H1 (cell line): ENCODE measurements at regions of chr12 and their contacts with region 1.

Region 1: GRCh38 chr12:108950991-108951739 is 69.7 kb downstream of the SVOP start:
- DNase-seq: peak; percentile 17 to 81
- H3K4me3 ChIP-seq: no peak overlapping the region
- H3K27ac ChIP-seq: no peak overlapping the region
- H3K4me1 ChIP-seq: no peaks in the 10 kb centered on the region
- H3K27me3 ChIP-seq: no peaks in the 10 kb centered on the region
- CTCF ChIP-seq: peak; percentile 78 to 85 (median 83)
- EP300 ChIP-seq: no peak
- POLR2A ChIP-seq: no peak
- RAD21 ChIP-seq: peak; percentile 91 to 96

Region 2: DNA sequence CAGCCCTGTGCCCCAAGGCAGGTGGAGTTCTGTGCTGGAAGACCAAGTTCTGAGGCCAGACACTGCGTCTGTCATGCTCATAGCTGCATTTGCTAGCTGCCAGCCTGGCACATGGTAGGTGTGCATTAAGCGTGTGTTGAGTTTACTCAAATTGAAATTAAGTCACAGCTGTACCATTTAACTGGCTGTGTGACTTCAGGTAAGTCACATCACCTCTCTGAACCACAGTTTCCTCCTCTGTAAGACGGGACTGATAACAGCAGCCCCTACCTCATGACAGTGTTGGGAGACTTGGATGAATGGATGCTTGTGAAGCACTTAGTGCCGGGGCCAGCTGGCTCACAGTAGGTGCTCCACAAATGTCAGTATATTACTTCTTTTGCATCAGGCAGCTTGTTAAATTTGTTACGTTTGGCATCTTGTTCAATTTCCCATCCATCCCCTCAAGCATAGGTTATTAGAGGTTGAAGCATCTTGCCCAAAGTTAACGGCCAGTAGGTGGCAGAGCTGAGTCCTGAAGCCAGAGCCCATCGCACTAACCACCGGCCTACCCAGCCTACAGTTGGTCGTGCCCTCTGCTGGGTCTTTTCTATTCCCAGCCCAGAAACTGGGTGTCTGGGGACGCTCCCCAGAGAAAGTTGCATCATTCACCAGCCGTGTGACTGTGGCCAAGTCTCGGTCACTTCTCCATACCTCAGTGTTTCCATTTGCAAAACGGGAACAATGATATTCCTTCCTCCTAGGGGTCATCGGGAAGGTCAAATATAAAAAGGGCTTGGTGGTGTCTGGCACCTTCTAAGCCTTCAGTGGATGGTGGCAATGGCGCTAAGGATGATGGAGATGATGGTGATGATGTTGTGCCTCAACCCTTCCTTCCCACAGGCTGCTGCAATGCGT is 66.8 kb before region 1 on chr12:
- CTCF ChIA-PET with region 1: interaction called, 71 read pairs
- POLR2A ChIA-PET with region 1: no interaction called
- DNase-seq: peak; percentile 15 to 90
- H3K4me3 ChIP-seq: no peak overlapping the region
- H3K27ac ChIP-seq: no peak overlapping the region
- H3K4me1 ChIP-seq: peaks cover 0 to 5% (median 3%) of the 10 kb centered on the region in 4 experiments; a peak in 5 of 7 replicates
- H3K27me3 ChIP-seq: no peaks in the 10 kb centered on the region
- CTCF ChIP-seq: peak; percentile 73 to 84 (median 77)
- EP300 ChIP-seq: no peak
- POLR2A ChIP-seq: no peak
- RAD21 ChIP-seq: peak; percentile 55 to 73

Region 3: DNA sequence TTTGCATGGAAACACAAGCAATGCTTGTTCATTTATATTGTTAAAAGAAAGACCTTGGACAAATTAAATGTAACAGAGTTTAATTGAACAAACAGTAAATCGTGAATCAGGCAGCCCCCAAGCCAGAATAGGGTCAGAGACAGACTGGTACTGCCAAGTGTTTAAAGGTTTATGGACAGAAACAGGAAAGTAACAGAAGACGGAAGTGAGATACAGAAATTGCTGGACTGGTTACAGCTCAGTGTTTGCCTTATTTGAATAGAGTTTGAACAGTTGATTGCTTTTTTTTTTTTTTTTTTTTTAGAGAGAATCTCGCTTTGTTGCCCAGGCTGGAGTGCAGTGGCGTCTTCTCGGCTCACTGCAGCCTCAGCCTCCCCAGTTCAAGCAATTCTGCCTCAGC is 21.0 kb before region 1 on chr12:
- CTCF ChIA-PET with region 1: interaction called, 18 read pairs
- POLR2A ChIA-PET with region 1: no interaction called
- DNase-seq: no peak
- H3K4me3 ChIP-seq: no peak overlapping the region
- H3K27ac ChIP-seq: no peak overlapping the region
- H3K4me1 ChIP-seq: peaks cover 0 to 4% (median 0%) of the 10 kb centered on the region in 4 experiments; a peak in 3 of 7 replicates
- H3K27me3 ChIP-seq: no peaks in the 10 kb centered on the region
- CTCF ChIP-seq: no peak
- EP300 ChIP-seq: no peak
- POLR2A ChIP-seq: no peak
- RAD21 ChIP-seq: no peak

Region 4: GRCh38 chr12:108939594-108939993 is 11.6 kb before region 1 on chr12:
- CTCF ChIA-PET with region 1: interaction called, 11 read pairs
- POLR2A ChIA-PET with region 1: interaction called, 4 read pairs
- DNase-seq: no peak
- H3K4me3 ChIP-seq: no peak overlapping the region
- H3K27ac ChIP-seq: no peak overlapping the region
- H3K4me1 ChIP-seq: no peaks in the 10 kb centered on the region; a peak in 1 of 7 replicates
- H3K27me3 ChIP-seq: no peaks in the 10 kb centered on the region
- CTCF ChIP-seq: no peak
- EP300 ChIP-seq: no peak
- POLR2A ChIP-seq: no peak
- RAD21 ChIP-seq: no peak

Region 5: DNA sequence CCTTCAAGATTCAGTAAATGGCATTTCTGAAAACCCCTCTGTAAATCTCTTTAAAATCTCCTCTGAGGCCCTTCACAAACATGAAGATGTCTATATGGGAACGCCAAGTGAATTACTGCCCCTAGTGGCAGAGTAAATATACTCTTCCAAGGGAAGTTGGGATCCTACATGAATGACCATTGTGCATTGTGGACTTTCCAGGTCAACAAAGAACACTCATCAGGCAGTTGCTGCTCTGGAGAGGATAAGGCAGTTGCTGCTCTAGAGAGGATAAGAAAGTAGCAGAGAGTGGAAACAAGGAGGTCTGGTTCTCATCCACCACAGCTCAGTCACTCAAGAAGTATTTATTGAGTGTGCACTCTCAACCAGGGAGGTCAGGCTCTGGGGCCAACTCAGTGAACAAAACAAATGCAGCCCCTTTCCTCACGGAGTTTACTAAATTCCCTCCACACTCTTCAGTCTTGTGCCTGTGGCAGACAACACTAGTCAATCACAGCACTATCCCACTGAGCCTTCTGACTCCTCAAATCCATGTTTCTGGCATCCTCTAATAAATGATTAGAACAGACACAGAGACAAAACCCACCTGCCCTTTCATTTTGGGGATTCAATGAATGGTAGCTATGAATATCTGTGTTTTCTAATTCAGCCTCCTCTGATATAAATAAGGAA is 16.8 kb after region 1 on chr12:
- CTCF ChIA-PET with region 1: interaction called, 17 read pairs
- POLR2A ChIA-PET with region 1: no interaction called
- DNase-seq: no peak
- H3K4me3 ChIP-seq: no peak overlapping the region
- H3K27ac ChIP-seq: no peak overlapping the region
- H3K4me1 ChIP-seq: no peaks in the 10 kb centered on the region
- H3K27me3 ChIP-seq: no peaks in the 10 kb centered on the region; a peak in 1 of 7 replicates
- CTCF ChIP-seq: peak in 2 of 3 experiments; percentile 40 to 71; a peak in 2 of 4 replicates
- EP300 ChIP-seq: no peak
- POLR2A ChIP-seq: no peak
- RAD21 ChIP-seq: peak; percentile 31 to 55

Region 6: DNA sequence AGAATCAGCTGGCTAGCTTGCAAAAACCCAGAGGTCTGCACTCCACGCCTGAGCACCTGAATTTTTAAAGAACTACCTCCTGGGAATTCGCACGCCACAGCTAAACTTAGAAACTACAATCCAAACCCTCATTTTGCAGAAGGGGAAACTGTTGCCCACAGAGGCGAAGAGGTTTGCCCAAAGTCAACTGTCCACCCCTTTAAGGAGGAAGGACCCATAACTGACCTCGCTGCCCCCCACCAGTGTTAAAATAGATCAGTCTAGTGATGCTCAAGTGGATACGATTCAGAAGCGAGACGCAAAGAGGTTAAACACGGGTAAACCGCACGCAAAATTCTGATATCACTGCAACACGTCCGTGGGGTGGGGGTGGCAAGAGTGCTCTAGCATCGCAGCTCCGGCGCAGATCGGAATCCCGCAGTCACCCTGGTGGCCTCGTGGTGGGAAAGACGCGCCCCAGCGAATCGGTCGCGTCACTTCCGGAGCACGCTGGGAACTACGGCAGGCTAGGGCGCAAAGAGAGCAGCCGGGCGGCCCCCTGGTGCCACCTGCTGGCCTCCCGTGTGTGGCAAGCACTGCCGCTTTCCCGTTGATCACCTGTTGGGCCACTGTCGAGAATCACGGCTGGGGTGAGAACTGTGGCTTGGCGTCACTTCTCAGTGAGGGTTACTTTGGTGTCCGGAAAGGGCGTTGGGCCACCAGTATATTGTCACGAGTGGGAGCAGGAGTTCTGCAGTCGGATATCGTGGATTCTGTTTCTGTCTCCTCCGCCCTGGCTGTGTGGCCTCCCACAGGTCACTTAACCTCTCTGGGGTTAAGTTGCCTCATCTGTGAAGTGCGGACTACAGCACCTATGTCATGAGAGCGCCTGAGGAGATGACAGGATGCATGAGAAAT is 142.1 kb after region 1 on chr12 and contains the start of gene ALKBH2:
- CTCF ChIA-PET with region 1: interaction called, 18 read pairs
- POLR2A ChIA-PET with region 1: no interaction called
- DNase-seq: peak; percentile 70 to 94
- H3K4me3 ChIP-seq: peak within 1 kb of the TSS; percentile 1 to 57 (median 16); a peak in 6 of 8 replicates
- H3K27ac ChIP-seq: no peak within 1 kb of the TSS
- H3K4me1 ChIP-seq: peaks cover 0 to 7% (median 2%) of the 10 kb centered on the region in 4 experiments; a peak in 3 of 7 replicates
- H3K27me3 ChIP-seq: peaks cover 0 to 8% (median 5%) of the 10 kb centered on the region in 4 experiments; a peak in 5 of 7 replicates
- CTCF ChIP-seq: peak; percentile 93 to 99 (median 96)
- EP300 ChIP-seq: peak in 1 of 2 experiments; percentile 64; a peak in 1 of 3 replicates
- POLR2A ChIP-seq: peak; percentile 61 to 94
- RAD21 ChIP-seq: peak; percentile 96 to 97
- total RNA-seq, gene ALKBH2: 22.5 and 25.9 TPM in 2 replicates